B cell (primary cell): ENCODE measurements at regions of chr19 and their contacts with region 1.

Region 1: DNA sequence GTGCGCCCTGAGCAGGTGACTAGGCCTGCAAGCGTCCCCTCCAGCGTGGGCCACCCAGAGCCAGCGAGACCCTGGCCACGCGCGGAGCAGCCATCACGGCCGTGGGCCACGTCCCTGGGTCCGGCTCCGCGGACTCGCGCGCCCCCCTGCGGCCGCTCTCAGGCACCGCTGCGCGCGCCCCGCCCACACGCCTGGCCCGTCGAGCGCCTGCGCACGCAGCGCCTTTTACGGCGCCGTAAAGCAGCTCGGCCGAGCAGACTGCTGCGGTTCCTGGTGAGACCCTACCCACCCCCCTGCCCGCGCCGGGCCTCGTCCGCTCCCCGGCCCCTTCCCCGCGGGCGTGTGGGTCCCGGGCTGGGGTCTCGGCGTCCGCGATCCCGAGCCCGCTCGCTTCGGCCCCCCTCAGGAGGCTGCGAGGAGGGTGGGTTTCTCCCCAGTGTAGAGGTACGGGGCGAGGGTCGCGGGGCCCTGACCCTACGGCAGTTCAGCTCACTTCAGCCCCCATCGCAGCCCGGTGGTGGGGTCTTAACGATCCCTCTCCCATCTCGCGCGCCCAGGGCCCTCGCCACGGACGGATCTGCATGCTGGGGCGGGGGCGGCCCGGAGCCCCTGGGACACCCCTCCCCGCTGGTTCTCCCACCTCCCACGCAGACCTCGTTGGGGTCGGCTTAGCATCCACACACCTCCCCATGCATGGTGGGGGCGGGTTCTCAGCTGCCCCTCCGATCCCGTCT is at the start of gene TRAPPC5:
- DNase-seq: peak; percentile 93
- ATAC-seq: peak; percentile 65
- H3K4me3 ChIP-seq: peak within 1 kb of the TSS; percentile 35 to 98 (median 93)
- H3K4me3 Mint-ChIP-seq: peak within 1 kb of the TSS; percentile 87
- H3K27ac ChIP-seq: peak within 1 kb of the TSS; percentile 79 to 92
- H3K27ac Mint-ChIP-seq: peak within 1 kb of the TSS; percentile 92
- H3K4me1 ChIP-seq: peaks cover 37 to 45% of the 10 kb centered on the region in 2 donors
- H3K4me1 Mint-ChIP-seq: peaks cover 63% of the 10 kb centered on the region
- H3K27me3 ChIP-seq: peaks cover 0 to 21% (median 3%) of the 10 kb centered on the region in 4 experiments
- H3K27me3 Mint-ChIP-seq: peaks cover 15% of the 10 kb centered on the region
- CTCF ChIP-seq: peak; percentile 95
- total RNA-seq, gene TRAPPC5: 61.2 and 61.5 TPM in 2 replicates

Region 2: DNA sequence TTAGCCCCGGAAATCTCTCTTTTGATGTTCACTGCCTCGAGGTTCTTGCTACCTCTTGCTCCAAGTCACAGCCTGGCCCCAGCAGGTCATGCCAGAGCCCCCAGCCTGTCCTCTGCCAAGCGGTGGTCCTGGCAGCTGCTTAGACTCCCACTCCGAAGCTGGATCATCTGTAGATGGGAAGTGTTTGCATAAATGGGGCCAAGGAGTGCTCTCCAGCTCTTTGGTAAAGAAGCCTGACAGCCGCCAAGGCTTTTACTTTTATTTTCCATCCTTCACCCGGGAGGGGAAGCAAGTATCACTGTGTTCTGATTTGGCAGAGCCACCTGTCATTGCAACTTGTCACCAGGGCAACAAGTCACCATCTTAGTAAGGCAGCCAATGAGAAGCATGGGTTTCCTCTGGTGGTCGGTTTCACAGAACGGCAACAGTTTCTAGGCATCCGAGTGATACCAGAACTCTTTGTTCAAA is 22.5 kb before region 1 on chr19:
- CTCF ChIA-PET with region 1: interaction called, 9 read pairs
- POLR2A ChIA-PET with region 1: no interaction called
- intact Hi-C with region 1: loop called (anchors 1 kb)
- DNase-seq: peak; percentile 88
- ATAC-seq: peak; percentile 98
- H3K4me3 ChIP-seq: peak overlapping the region; percentile 25 to 55 (median 44)
- H3K4me3 Mint-ChIP-seq: peak overlapping the region; percentile 76
- H3K27ac ChIP-seq: peak overlapping the region; percentile 69 to 84
- H3K27ac Mint-ChIP-seq: peak overlapping the region; percentile 87
- H3K4me1 ChIP-seq: peaks cover 9 to 18% of the 10 kb centered on the region in 2 donors
- H3K4me1 Mint-ChIP-seq: peaks cover 10% of the 10 kb centered on the region
- H3K27me3 ChIP-seq: peaks cover 0 to 5% (median 0%) of the 10 kb centered on the region in 4 experiments
- H3K27me3 Mint-ChIP-seq: no peaks in the 10 kb centered on the region
- CTCF ChIP-seq: no peak

Region 3: DNA sequence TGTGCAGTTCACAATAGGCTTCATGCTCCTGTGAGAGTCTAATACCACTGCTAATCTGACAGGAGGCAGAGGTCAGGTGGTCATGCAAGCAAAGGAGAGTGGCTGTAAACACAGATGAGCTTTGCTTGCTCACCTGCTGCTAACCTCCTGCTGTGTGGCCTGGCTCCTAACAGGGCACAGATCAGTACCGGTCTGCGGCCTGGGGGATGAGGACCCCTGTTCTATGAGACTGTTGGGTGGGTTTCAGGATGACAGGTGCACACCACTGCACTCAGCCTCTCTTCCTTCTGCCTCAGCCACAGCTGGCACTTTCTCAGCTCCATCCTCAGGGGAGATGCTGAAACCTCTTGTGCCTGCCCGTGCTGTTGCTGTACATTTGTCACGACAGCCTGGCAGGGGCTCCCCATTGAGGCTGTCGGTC is 41.5 kb after region 1 on chr19:
- CTCF ChIA-PET with region 1: interaction called, 8 read pairs
- POLR2A ChIA-PET with region 1: interaction called, 4 read pairs
- intact Hi-C with region 1: loop called (anchors 5 kb)
- DNase-seq: no peak
- ATAC-seq: peak; percentile 38
- H3K4me3 ChIP-seq: no peak overlapping the region
- H3K4me3 Mint-ChIP-seq: no peak overlapping the region
- H3K27ac ChIP-seq: no peak overlapping the region
- H3K27ac Mint-ChIP-seq: peak overlapping the region; percentile 26
- H3K4me1 ChIP-seq: peaks cover 27 to 40% of the 10 kb centered on the region in 2 donors
- H3K4me1 Mint-ChIP-seq: peaks cover 38% of the 10 kb centered on the region
- H3K27me3 ChIP-seq: peaks cover 0 to 3% (median 0%) of the 10 kb centered on the region in 4 experiments
- H3K27me3 Mint-ChIP-seq: peaks cover under 1% of the 10 kb centered on the region
- CTCF ChIP-seq: no peak

Region 4: GRCh38 chr19:7799640-7800355 is 119.0 kb after region 1 on chr19:
- CTCF ChIA-PET with region 1: interaction called, 145 read pairs
- POLR2A ChIA-PET with region 1: interaction called, 4 read pairs
- intact Hi-C with region 1: loop called (anchors 1 kb)
- DNase-seq: peak; percentile 79
- ATAC-seq: peak; percentile 64
- H3K4me3 ChIP-seq: peak overlapping the region in 4 of 5 experiments; percentile 17 to 27 (median 20)
- H3K4me3 Mint-ChIP-seq: peak overlapping the region; percentile 60
- H3K27ac ChIP-seq: no peak overlapping the region
- H3K27ac Mint-ChIP-seq: no peak overlapping the region
- H3K4me1 ChIP-seq: peaks cover 7 to 16% of the 10 kb centered on the region in 2 donors
- H3K4me1 Mint-ChIP-seq: peaks cover 9% of the 10 kb centered on the region
- H3K27me3 ChIP-seq: peaks cover 0 to 13% (median 3%) of the 10 kb centered on the region in 4 experiments
- H3K27me3 Mint-ChIP-seq: peaks cover 10% of the 10 kb centered on the region
- CTCF ChIP-seq: peak; percentile 84

Region 5: DNA sequence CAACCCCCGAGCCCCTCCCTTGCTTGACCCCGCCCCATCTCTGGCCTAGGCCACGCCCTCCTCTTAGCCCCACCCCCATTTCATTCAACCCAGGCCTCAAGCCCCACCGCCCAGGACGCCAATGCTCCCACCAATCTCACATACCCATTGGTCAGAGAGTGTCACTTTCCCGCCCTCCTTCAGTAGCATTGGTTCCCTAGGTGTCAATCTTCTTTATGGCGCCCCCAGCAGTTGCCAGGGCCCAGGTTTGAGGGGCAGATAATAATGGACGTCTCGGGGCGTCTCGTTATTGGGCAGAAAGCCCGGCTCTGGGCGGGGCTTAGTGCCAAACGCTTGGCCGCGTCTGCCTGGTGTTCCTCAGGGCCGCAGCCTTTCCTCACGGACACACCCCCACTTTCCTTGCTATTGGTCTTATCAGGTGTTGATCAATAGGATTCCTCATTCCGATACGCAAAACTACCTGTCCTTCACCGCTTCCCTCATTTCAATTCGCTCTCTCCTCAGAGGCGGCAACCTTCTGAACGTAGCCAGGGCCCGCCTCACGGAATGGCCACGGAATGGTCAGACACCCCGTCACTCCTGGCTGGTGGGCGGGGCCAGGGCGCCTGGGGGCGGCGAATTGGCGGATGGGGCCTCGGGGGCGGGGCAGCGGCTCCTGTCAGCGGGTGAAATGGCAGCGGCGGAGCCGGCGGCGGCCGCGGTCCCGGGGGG is 148.9 kb after region 1 on chr19 and contains the start of gene EVI5L:
- CTCF ChIA-PET with region 1: interaction called, 5 read pairs
- POLR2A ChIA-PET with region 1: interaction called, 3 read pairs
- intact Hi-C with region 1: loop called (anchors 1 kb)
- DNase-seq: peak; percentile 99
- ATAC-seq: peak; percentile 81
- H3K4me3 ChIP-seq: peak within 1 kb of the TSS in 4 of 5 experiments; percentile 39 to 64 (median 55)
- H3K4me3 Mint-ChIP-seq: peak within 1 kb of the TSS; percentile 82
- H3K27ac ChIP-seq: peak within 1 kb of the TSS in 1 of 2 donors; percentile 62
- H3K27ac Mint-ChIP-seq: peak within 1 kb of the TSS; percentile 84
- H3K4me1 ChIP-seq: peaks cover 8 to 15% of the 10 kb centered on the region in 2 donors
- H3K4me1 Mint-ChIP-seq: peaks cover 24% of the 10 kb centered on the region
- H3K27me3 ChIP-seq: no peaks in the 10 kb centered on the region
- H3K27me3 Mint-ChIP-seq: no peaks in the 10 kb centered on the region
- CTCF ChIP-seq: no peak
- total RNA-seq, gene EVI5L: 11.2 and 11.8 TPM in 2 replicates